ENCODE measurements at regions of chr16 and their contacts with region 1.

Region 1: DNA sequence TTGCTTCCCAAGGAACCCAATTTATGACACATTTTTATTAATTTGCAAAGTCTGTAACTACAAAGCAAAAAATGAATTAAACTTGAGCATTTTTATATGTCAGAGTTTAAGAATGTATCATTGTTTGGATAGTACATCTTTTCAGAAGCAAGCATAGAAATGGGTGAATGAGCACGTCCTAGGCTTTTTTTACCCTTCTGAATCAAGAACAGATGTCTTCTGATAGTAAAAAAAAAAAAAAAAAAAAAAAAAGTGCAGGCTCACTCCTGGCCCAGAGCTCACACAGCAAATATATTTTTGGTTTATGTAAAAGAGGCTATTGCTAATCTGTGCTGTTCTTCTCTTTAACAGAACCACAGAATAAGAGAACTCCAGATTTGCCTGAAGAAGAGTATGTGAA is 6.3 kb downstream of the TERF2IP start:
- DNase-seq: no peak
- ATAC-seq: no peak
- H3K4me3 ChIP-seq: no peak overlapping the region
- H3K4me1 ChIP-seq: peaks cover 14% of the 10 kb centered on the region
- CTCF ChIP-seq: no peak

Region 2: DNA sequence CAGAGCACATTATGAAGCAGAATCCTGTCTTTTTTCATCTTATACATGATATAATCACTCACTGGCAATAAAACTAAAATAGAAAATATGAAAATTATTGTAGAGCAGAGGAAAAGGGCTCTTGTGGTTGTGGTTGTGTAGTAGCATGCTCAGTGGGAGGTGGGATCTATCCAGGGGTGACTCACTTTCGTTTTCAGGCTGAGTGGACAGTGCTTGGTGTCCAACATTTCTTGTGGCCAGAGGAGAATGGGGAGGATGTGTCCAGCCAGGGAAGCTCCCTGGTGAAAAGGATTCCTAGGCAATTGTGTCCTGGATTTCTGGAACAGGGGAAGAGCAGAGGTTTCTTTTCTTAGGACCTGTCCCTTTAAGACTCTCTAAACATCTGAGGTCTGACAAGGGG is 104.3 kb after region 1 on chr16:
- intact Hi-C with region 1: loop called in 1 of 2 experiments (anchors 10 kb)
- DNase-seq: no peak
- ATAC-seq: no peak
- H3K4me3 ChIP-seq: no peak overlapping the region
- H3K4me1 ChIP-seq: no peaks in the 10 kb centered on the region
- CTCF ChIP-seq: no peak

Measured in mucosa of descending colon (tissue), 3 donors.